Activated B cell treated with CpG ODN at 0.5 μM for 24 hours (primary cell): ENCODE measurements at regions of chr19 and their contacts with region 1.

Region 1: GRCh38 chr19:10653715-10654492 is at the start of gene ILF3:
- DNase-seq: peak; percentile 98
- ATAC-seq: peak; percentile 78
- H3K4me3 Mint-ChIP-seq: peak within 1 kb of the TSS; percentile 95
- H3K27ac Mint-ChIP-seq: peak within 1 kb of the TSS; percentile 99
- H3K4me1 Mint-ChIP-seq: peaks cover 48% of the 10 kb centered on the region
- H3K27me3 Mint-ChIP-seq: peaks cover 1% of the 10 kb centered on the region
- CTCF ChIP-seq: no peak
- total RNA-seq, gene ILF3: 373 and 399 TPM in 2 replicates

Region 2: DNA sequence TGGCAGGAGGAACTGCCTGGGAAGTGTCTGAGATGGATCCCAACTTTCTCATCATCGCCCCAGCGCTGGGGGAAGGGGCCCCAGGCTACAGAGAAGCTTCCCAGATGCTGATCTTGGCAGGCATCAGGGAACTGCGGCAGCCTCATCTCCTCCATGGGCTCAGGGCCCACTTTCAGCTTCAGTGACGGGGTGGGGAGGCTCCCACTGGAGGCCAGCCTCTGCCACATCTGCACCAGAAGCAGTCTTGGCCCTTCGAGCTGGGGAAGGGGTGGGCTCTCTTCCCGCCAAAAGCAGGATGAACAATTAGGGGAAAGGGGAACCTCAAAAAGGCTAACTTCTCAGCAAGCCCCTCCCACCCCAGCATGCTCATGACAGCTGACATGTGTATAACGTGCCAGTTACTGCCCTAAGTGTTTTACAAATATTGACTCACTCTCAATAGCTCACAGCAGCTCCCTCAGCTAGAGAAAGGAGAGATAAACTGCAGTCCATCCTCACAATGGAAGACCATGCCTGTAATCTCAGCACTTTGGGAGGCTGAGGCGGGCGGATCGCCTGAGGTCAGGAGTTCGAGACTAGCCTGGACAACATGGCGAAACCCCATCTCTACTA is 415.6 kb before region 1 on chr19:
- CTCF ChIA-PET with region 1: no interaction called
- POLR2A ChIA-PET with region 1: no interaction called
- intact Hi-C with region 1: loop called (anchors 5 kb)
- DNase-seq: no peak
- ATAC-seq: no peak
- H3K4me3 Mint-ChIP-seq: no peak overlapping the region
- H3K27ac Mint-ChIP-seq: peak overlapping the region; percentile 73
- H3K4me1 Mint-ChIP-seq: peaks cover 51% of the 10 kb centered on the region
- H3K27me3 Mint-ChIP-seq: no peaks in the 10 kb centered on the region
- CTCF ChIP-seq: no peak

Region 3: GRCh38 chr19:10502524-10503001 is 151.3 kb before region 1 on chr19:
- CTCF ChIA-PET with region 1: no interaction called
- POLR2A ChIA-PET with region 1: no interaction called
- intact Hi-C with region 1: loop called (anchors 1 kb)
- DNase-seq: peak; percentile 90
- ATAC-seq: peak; percentile 91
- H3K4me3 Mint-ChIP-seq: peak overlapping the region; percentile 87
- H3K27ac Mint-ChIP-seq: peak overlapping the region; percentile 90
- H3K4me1 Mint-ChIP-seq: peaks cover 23% of the 10 kb centered on the region
- H3K27me3 Mint-ChIP-seq: no peaks in the 10 kb centered on the region
- CTCF ChIP-seq: no peak

Region 4: DNA sequence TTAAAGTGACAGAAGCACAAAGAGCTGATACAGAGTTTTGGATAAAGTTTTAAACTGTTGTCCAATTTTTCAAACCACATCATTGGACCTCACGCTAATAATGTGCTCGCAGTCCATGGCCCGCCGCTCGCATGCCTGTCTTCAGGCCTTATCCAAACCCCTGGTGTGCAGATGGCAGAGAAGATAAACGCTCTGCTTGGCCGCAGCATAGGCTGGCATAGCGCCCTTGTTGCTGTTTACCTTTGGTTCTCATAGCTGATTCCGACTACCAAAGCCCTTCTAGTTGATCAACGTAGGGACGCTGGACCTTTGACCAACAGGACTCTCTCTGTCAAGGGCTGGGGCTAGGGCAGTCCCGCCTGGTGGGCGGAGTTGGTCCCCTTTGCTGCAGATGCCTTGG is 23.8 kb after region 1 on chr19:
- CTCF ChIA-PET with region 1: no interaction called
- POLR2A ChIA-PET with region 1: no interaction called
- intact Hi-C with region 1: no loop called
- DNase-seq: no peak
- ATAC-seq: no peak
- H3K4me3 Mint-ChIP-seq: no peak overlapping the region
- H3K27ac Mint-ChIP-seq: no peak overlapping the region
- H3K4me1 Mint-ChIP-seq: peaks cover 3% of the 10 kb centered on the region
- H3K27me3 Mint-ChIP-seq: no peaks in the 10 kb centered on the region
- CTCF ChIP-seq: no peak

Region 5: GRCh38 chr19:10695401-10696398 is 41.8 kb after region 1 on chr19:
- CTCF ChIA-PET with region 1: interaction called, 6 read pairs
- POLR2A ChIA-PET with region 1: interaction called, 6 read pairs
- intact Hi-C with region 1: loop called (anchors 1 kb)
- DNase-seq: peak; percentile 79
- ATAC-seq: peak; percentile 98
- H3K4me3 Mint-ChIP-seq: peak overlapping the region; percentile 76
- H3K27ac Mint-ChIP-seq: peak overlapping the region; percentile 26
- H3K4me1 Mint-ChIP-seq: peaks cover 17% of the 10 kb centered on the region
- H3K27me3 Mint-ChIP-seq: peaks cover 5% of the 10 kb centered on the region
- CTCF ChIP-seq: no peak

Region 6: GRCh38 chr19:10730923-10731322 is 77.0 kb after region 1 on chr19:
- CTCF ChIA-PET with region 1: no interaction called
- POLR2A ChIA-PET with region 1: no interaction called
- intact Hi-C with region 1: no loop called
- DNase-seq: no peak
- ATAC-seq: peak; percentile 20
- H3K4me3 Mint-ChIP-seq: peak overlapping the region; percentile 24
- H3K27ac Mint-ChIP-seq: peak overlapping the region; percentile 91
- H3K4me1 Mint-ChIP-seq: peaks cover 65% of the 10 kb centered on the region
- H3K27me3 Mint-ChIP-seq: no peaks in the 10 kb centered on the region
- CTCF ChIP-seq: no peak

Region 7: DNA sequence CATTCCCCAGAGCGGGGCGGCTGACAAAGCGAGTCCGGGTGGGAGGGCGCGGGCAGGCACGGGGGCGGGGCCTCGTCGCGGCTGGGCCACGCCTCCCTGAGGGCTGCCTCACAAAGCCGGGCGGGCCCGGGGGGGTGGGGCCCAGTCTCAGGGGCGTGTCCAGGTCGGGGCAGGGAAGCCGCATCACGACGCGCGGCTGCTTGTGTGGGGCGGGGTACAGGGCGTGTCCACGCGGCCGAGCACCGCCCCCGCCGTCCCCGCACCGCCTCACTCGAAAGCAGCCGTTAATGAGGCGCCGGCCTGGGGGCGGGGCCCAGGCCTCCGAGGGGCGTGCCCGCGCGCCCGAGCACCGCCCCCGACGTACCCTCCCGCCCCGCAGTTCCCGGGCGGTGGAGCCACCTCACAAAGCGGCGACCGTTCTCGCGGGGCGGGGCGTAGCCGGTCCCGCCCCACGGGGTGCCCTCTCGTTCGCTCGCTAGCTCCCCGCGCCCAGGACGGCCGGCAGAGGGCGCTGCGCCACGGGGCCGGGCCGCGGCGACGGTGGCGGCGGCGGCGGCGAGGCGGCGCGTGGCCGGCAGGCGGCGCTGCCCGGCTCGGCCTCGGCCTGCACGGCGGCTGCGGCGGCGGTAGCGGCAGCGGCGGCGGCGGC is 217.2 kb after region 1 on chr19 and contains the start of gene CARM1:
- CTCF ChIA-PET with region 1: no interaction called
- POLR2A ChIA-PET with region 1: no interaction called
- intact Hi-C with region 1: loop called (anchors 5 kb)
- DNase-seq: peak; percentile 100
- ATAC-seq: peak; percentile 84
- H3K4me3 Mint-ChIP-seq: peak within 1 kb of the TSS; percentile 83
- H3K27ac Mint-ChIP-seq: peak within 1 kb of the TSS; percentile 88
- H3K4me1 Mint-ChIP-seq: peaks cover 44% of the 10 kb centered on the region
- H3K27me3 Mint-ChIP-seq: no peaks in the 10 kb centered on the region
- CTCF ChIP-seq: no peak
- total RNA-seq, gene CARM1: 32.3 and 39.1 TPM in 2 replicates

Region 8: GRCh38 chr19:11268783-11269267 is 614.9 kb after region 1 on chr19:
- CTCF ChIA-PET with region 1: no interaction called
- POLR2A ChIA-PET with region 1: no interaction called
- intact Hi-C with region 1: no loop called
- DNase-seq: no peak
- ATAC-seq: no peak
- H3K4me3 Mint-ChIP-seq: no peak overlapping the region
- H3K27ac Mint-ChIP-seq: no peak overlapping the region
- H3K4me1 Mint-ChIP-seq: no peaks in the 10 kb centered on the region
- H3K27me3 Mint-ChIP-seq: peaks cover 13% of the 10 kb centered on the region
- CTCF ChIP-seq: no peak